ENCODE measurements at regions of chr15 and their contacts with region 1.

Region 1: GRCh38 chr15:70679919-70680231 is 83.5 kb downstream of the UACA start:
- DNase-seq: no peak
- H3K4me3 ChIP-seq: no peak overlapping the region
- H3K27ac ChIP-seq: no peak overlapping the region
- H3K27me3 ChIP-seq: no peaks in the 10 kb centered on the region
- CTCF ChIP-seq: peak in 6 of 56 donors; percentile 2 to 54 (median 14)

Region 2: GRCh38 chr15:70559265-70560239 is 120.3 kb before region 1 on chr15:
- intact Hi-C with region 1: no loop called
- DNase-seq: no peak
- H3K4me3 ChIP-seq: no peak overlapping the region
- H3K27ac ChIP-seq: no peak overlapping the region
- H3K27me3 ChIP-seq: peaks cover 0 to 7% (median 0%) of the 10 kb centered on the region in 45 donors
- CTCF ChIP-seq: no peak

Region 3: GRCh38 chr15:70726753-70727152 is 46.9 kb after region 1 on chr15:
- intact Hi-C with region 1: no loop called
- DNase-seq: no peak
- H3K4me3 ChIP-seq: no peak overlapping the region
- H3K27ac ChIP-seq: peak overlapping the region in 1 of 59 donors; percentile 27
- H3K27me3 ChIP-seq: no peaks in the 10 kb centered on the region
- CTCF ChIP-seq: no peak

Region 4: GRCh38 chr15:70815644-70816043 is 135.8 kb after region 1 on chr15:
- intact Hi-C with region 1: loop called (anchors 2 to 5 kb)
- DNase-seq: no peak
- H3K4me3 ChIP-seq: no peak overlapping the region
- H3K27ac ChIP-seq: no peak overlapping the region
- H3K27me3 ChIP-seq: no peaks in the 10 kb centered on the region
- CTCF ChIP-seq: no peak